Caco-2 (cell line): ENCODE measurements at regions of chr3 and their contacts with region 1.

Region 1: GRCh38 chr3:48492543-48493501 is 11.2 kb downstream of the SHISA5 start:
- DNase-seq: no peak
- H3K4me3 ChIP-seq: no peak overlapping the region
- H3K4me3 Mint-ChIP-seq: no peak overlapping the region
- H3K27ac Mint-ChIP-seq: no peak overlapping the region
- H3K4me1 ChIP-seq: peaks cover 7% of the 10 kb centered on the region; the same call in 1 of the 2 replicates
- H3K4me1 Mint-ChIP-seq: no peaks in the 10 kb centered on the region
- H3K27me3 ChIP-seq: no peaks in the 10 kb centered on the region
- H3K27me3 Mint-ChIP-seq: no peaks in the 10 kb centered on the region
- CTCF ChIP-seq: no peak

Region 2: DNA sequence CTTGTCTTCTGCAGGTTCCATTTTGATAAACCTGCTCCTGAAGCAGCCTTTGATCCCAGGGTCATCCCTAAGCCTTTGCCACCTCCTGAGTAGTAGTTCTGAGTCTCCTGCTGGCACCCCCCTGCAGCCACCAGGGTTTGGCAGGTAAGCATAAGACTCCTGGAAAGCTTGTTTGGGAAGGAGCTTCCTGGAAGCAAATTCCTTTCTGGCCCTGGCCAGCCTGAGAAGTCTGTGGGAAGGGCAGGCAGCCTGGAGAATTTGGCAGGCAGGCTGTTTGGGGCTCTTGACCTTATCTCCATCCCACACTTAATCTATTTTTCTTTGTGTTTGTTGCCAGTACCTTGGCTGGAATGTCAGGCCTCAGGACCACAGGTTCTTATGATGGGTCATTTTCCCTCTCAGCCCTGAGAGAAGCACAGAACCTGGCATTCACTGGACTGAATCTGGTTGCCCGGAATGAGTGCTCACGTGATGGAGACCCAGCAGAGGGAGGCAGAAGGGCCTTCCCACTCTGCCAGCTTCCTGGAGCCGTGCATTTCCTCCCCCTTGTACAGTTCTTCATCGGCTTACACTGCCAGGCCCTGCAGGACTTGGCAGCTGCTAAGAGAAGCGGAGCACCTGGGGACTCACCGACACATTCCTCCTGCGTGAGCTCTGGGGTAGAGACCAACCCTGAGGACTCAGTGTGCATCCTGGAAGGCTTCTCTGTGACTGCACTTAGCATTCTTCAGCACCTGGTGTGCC is 32.9 kb before region 1 on chr3:
- CTCF ChIA-PET with region 1: interaction called, 8 read pairs
- POLR2A ChIA-PET with region 1: interaction called, 12 read pairs
- intact Hi-C with region 1: no loop called
- DNase-seq: no peak
- H3K4me3 ChIP-seq: no peak overlapping the region
- H3K4me3 Mint-ChIP-seq: no peak overlapping the region
- H3K27ac Mint-ChIP-seq: no peak overlapping the region
- H3K4me1 ChIP-seq: no peaks in the 10 kb centered on the region
- H3K4me1 Mint-ChIP-seq: no peaks in the 10 kb centered on the region
- H3K27me3 ChIP-seq: no peaks in the 10 kb centered on the region
- H3K27me3 Mint-ChIP-seq: no peaks in the 10 kb centered on the region
- CTCF ChIP-seq: no peak

Region 3: GRCh38 chr3:48478596-48479555 is 13.9 kb before region 1 on chr3:
- CTCF ChIA-PET with region 1: interaction called, 3 read pairs
- POLR2A ChIA-PET with region 1: interaction called, 11 read pairs
- intact Hi-C with region 1: no loop called
- DNase-seq: no peak
- H3K4me3 ChIP-seq: no peak overlapping the region
- H3K4me3 Mint-ChIP-seq: no peak overlapping the region
- H3K27ac Mint-ChIP-seq: peak overlapping the region; percentile 12
- H3K4me1 ChIP-seq: peaks cover 12% of the 10 kb centered on the region; the same call in 1 of the 2 replicates
- H3K4me1 Mint-ChIP-seq: peaks cover 13% of the 10 kb centered on the region
- H3K27me3 ChIP-seq: no peaks in the 10 kb centered on the region
- H3K27me3 Mint-ChIP-seq: no peaks in the 10 kb centered on the region
- CTCF ChIP-seq: no peak